ENCODE measurements at regions of chr3 and their contacts with region 1.

Region 1: GRCh38 chr3:102229062-102229655 is 205.7 kb upstream of the ZPLD1 start:
- DNase-seq: peak; percentile 64 to 89
- ATAC-seq: peak; percentile 90 to 94 (median 93)
- H3K4me3 ChIP-seq: no peak overlapping the region
- H3K4me3 Mint-ChIP-seq: no peak overlapping the region
- H3K27ac ChIP-seq: no peak overlapping the region
- H3K27ac Mint-ChIP-seq: no peak overlapping the region
- H3K4me1 ChIP-seq: peaks cover 3% of the 10 kb centered on the region
- H3K4me1 Mint-ChIP-seq: no peaks in the 10 kb centered on the region
- H3K27me3 ChIP-seq: no peaks in the 10 kb centered on the region
- H3K27me3 Mint-ChIP-seq: peaks cover 2 to 10% of the 10 kb centered on the region in 2 donors
- CTCF ChIP-seq: peak; percentile 86

Region 2: GRCh38 chr3:101695779-101696372 is 533.3 kb before region 1 on chr3:
- intact Hi-C with region 1: loop called (anchors 10 kb)
- DNase-seq: peak in 1 of 2 donors; percentile 83
- ATAC-seq: peak in 2 of 3 donors; percentile 44 to 48
- H3K4me3 ChIP-seq: no peak overlapping the region
- H3K4me3 Mint-ChIP-seq: no peak overlapping the region
- H3K27ac ChIP-seq: no peak overlapping the region
- H3K27ac Mint-ChIP-seq: no peak overlapping the region
- H3K4me1 ChIP-seq: no peaks in the 10 kb centered on the region
- H3K4me1 Mint-ChIP-seq: peaks cover 0 to 8% of the 10 kb centered on the region in 2 donors
- H3K27me3 ChIP-seq: no peaks in the 10 kb centered on the region
- H3K27me3 Mint-ChIP-seq: no peaks in the 10 kb centered on the region
- CTCF ChIP-seq: peak; percentile 86

Region 3: DNA sequence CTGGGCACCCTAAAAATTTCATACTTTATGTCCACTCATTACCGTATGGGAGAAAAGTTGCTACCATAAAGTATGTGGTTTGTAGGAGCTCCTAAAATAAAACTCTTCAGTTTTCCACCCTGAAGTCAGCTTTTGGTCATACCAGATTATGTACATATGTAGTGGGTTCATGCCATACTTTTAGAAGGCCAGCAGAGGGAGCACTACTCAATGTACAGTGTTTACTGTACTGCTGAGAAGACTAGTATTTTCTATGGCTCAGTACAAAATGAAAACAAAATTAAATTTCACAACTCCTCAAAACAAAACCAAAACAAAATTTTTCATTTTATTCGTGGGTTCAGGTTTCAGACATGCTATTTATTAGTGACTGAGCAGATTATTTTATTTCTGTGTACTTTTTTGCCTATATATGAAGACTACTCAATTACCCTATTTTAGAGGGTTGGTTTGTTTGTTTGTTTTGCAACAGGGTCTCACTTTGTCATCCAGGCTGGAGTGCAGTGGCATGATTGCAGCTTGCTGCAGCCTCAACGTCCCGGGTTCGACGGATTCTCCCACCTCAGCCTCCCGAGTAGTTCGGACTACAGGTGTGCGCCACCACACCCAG is 425.9 kb before region 1 on chr3:
- intact Hi-C with region 1: loop called (anchors 2 kb)
- DNase-seq: peak in 1 of 2 donors; percentile 90
- ATAC-seq: peak; percentile 100
- H3K4me3 ChIP-seq: no peak overlapping the region
- H3K4me3 Mint-ChIP-seq: peak overlapping the region; percentile 56
- H3K27ac ChIP-seq: peak overlapping the region; percentile 31
- H3K27ac Mint-ChIP-seq: peak overlapping the region; percentile 52 to 78
- H3K4me1 ChIP-seq: peaks cover 4% of the 10 kb centered on the region
- H3K4me1 Mint-ChIP-seq: peaks cover 7 to 17% of the 10 kb centered on the region in 2 donors
- H3K27me3 ChIP-seq: no peaks in the 10 kb centered on the region
- H3K27me3 Mint-ChIP-seq: no peaks in the 10 kb centered on the region
- CTCF ChIP-seq: peak; percentile 89

Region 4: GRCh38 chr3:102415553-102415952 is 186.4 kb after region 1 on chr3:
- intact Hi-C with region 1: no loop called
- DNase-seq: peak in 1 of 2 donors; percentile 3
- ATAC-seq: no peak
- H3K4me3 ChIP-seq: no peak overlapping the region
- H3K4me3 Mint-ChIP-seq: no peak overlapping the region
- H3K27ac ChIP-seq: no peak overlapping the region
- H3K27ac Mint-ChIP-seq: no peak overlapping the region
- H3K4me1 ChIP-seq: no peaks in the 10 kb centered on the region
- H3K4me1 Mint-ChIP-seq: no peaks in the 10 kb centered on the region
- H3K27me3 ChIP-seq: no peaks in the 10 kb centered on the region
- H3K27me3 Mint-ChIP-seq: no peaks in the 10 kb centered on the region
- CTCF ChIP-seq: no peak

Measured in natural killer cell (primary cell).